Panc1 (cell line): ENCODE measurements at regions of chr4 and their contacts with region 1.

Region 1: GRCh38 chr4:75895744-75896314 is 6.4 kb downstream of the PPEF2 start:
- DNase-seq: peak; percentile 22
- ATAC-seq: peak; percentile 76
- H3K4me3 ChIP-seq: no peak overlapping the region
- H3K27ac ChIP-seq: no peak overlapping the region
- H3K4me1 ChIP-seq: no peaks in the 10 kb centered on the region
- H3K27me3 ChIP-seq: no peaks in the 10 kb centered on the region
- CTCF ChIP-seq: peak; percentile 79

Region 2: GRCh38 chr4:75598390-75598789 is 297.4 kb before region 1 on chr4:
- CTCF ChIA-PET with region 1: no interaction called
- POLR2A ChIA-PET with region 1: no interaction called
- in situ Hi-C with region 1: no loop called
- intact Hi-C with region 1: no loop called
- DNase-seq: no peak
- ATAC-seq: no peak
- H3K4me3 ChIP-seq: no peak overlapping the region
- H3K27ac ChIP-seq: no peak overlapping the region
- H3K4me1 ChIP-seq: no peaks in the 10 kb centered on the region
- H3K27me3 ChIP-seq: no peaks in the 10 kb centered on the region
- CTCF ChIP-seq: no peak

Region 3: DNA sequence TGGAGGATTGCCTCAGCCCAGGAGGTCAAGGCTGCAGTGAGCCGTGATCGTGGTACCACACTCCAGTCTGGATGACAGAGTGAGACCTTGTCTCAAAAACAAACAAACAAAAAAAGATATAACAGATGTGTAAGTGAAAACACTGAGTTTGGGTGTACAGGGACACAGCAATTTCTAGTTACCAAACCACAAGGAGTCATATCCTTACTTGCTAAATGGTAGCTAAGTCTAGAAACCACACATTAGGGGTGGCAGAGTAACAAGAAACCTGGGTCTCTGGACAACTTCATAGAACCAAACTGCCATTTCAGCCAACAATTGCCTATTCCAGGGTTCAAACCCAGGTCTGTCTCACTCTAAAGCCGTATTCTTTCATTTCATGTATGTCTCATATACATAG is 14.4 kb before region 1 on chr4:
- CTCF ChIA-PET with region 1: interaction called, 10 read pairs
- POLR2A ChIA-PET with region 1: no interaction called
- in situ Hi-C with region 1: no loop called
- intact Hi-C with region 1: no loop called
- DNase-seq: no peak
- ATAC-seq: no peak
- H3K4me3 ChIP-seq: no peak overlapping the region
- H3K27ac ChIP-seq: no peak overlapping the region
- H3K4me1 ChIP-seq: no peaks in the 10 kb centered on the region
- H3K27me3 ChIP-seq: no peaks in the 10 kb centered on the region
- CTCF ChIP-seq: no peak